Activated B cell treated with CpG ODN at 0.5 μM for 24 hours (primary cell): ENCODE measurements at regions of chr12 and their contacts with region 1.

Region 1: DNA sequence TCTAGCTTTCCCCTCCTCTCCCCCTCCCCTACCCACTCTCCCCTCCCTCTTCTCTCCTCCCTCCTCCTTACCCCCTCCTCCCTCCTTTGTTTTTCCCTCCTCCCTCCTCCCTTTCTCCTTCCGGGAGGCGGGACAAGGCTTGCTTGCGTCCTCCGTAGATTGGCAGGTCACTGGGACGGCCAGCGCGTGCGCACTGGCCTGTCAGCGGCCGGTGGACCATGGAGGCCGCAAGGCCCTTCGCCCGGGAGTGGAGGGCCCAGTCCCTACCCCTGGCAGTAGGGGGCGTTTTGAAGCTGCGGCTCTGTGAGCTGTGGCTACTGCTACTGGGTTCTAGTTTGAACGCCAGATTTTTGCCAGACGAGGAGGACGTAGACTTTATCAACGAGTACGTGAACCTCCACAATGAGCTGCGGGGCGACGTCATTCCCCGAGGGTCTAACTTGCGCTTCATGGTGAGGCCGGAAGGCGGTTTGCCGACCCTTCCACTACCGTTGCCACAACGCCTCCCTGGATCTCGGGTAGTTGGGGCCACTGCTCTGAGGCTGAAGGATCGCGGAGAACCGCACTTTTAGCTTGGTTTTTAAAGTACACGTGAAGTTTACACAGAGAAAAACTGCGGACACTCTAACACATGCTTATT is at the start of gene GLIPR1L2:
- DNase-seq: peak; percentile 86
- ATAC-seq: peak; percentile 95
- H3K4me3 Mint-ChIP-seq: peak within 1 kb of the TSS; percentile 94
- H3K27ac Mint-ChIP-seq: peak within 1 kb of the TSS; percentile 97
- H3K4me1 Mint-ChIP-seq: peaks cover 38% of the 10 kb centered on the region
- H3K27me3 Mint-ChIP-seq: no peaks in the 10 kb centered on the region
- CTCF ChIP-seq: peak; percentile 68
- total RNA-seq, gene GLIPR1L2: 0.20 TPM in 1 of 2 replicates, not detected in the other

Region 2: DNA sequence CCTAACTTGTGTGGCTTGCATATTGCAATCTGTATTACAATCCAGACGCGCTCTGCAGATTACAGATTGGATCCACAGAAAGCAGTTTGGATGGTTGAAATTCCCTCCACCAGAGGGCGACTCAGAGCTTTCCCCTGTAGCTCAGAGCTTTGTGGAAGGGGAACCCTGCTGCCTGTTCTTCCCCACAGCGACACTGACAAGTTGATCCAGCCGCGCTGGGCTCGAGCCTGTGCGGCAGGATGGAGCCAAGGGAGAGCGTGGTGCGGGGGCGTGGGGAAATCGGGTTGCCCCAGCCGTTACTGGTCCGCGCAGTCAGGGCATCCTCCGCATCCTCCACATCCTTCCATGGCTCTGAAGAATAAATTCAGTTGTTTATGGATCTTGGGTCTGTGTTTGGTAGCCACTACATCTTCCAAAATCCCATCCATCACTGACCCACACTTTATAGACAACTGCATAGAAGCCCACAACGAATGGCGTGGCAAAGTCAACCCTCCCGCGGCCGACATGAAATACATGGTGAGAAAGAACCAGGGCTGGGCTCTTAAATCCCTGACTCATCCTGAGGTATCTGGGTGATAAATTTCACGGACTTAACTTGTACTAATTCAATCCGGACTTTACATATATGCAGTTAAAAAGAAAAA is 56.5 kb before region 1 on chr12 and contains the start of gene GLIPR1L1:
- CTCF ChIA-PET with region 1: interaction called, 7 read pairs
- POLR2A ChIA-PET with region 1: no interaction called
- intact Hi-C with region 1: loop called (anchors 1 kb)
- DNase-seq: peak; percentile 46
- ATAC-seq: peak; percentile 75
- H3K4me3 Mint-ChIP-seq: peak within 1 kb of the TSS; percentile 60
- H3K27ac Mint-ChIP-seq: no peak within 1 kb of the TSS
- H3K4me1 Mint-ChIP-seq: peaks cover 16% of the 10 kb centered on the region
- H3K27me3 Mint-ChIP-seq: peaks cover 23% of the 10 kb centered on the region
- CTCF ChIP-seq: peak; percentile 87
- total RNA-seq, gene GLIPR1L1: not detected in 2 replicates

Region 3: DNA sequence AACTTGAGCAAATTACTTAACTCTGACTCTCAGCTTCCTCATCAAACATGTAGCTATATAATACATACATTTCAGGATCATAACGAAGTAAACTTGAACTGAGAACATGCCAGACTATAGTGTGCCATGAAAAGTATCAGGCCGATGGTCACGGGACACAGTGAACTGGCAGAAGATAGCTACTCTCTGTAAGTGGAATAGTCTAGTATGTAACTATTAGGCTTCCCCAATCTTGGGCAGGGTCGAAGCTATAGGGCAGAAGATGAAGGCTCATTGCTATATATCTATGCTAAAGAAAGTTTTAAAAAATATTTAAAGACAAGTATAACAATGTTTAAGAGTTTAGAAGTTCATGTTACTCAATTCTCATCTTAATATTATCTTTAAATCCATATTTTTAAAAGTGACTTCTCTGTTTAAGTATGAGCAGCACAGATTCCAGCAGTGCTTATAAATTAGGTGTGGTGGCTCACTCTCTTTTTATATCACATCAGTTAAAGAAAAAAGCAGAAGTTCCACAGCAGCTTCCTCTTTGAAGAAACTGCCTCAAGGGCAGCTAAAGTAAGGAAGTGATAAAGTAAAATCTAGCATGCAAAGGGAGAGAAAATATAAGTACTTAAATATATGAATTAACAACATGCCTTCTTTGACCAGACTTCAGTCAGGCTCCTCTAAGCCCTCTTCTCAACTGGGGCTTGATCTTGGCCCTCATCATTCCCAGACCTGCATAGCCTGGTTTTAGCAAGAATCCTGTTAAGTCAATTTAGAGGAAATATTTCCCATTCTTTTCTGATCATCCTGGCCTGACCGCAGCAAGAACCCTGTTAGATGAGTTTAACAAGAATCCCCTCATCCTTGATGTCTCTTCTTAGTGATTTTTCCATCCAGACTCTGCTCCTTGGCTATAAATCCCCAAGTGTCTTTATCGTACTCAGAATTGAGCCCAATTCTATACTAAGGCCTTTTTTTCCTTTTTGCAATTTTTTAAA is 81.2 kb after region 1 on chr12:
- CTCF ChIA-PET with region 1: no interaction called
- POLR2A ChIA-PET with region 1: interaction called, 10 read pairs
- intact Hi-C with region 1: no loop called
- DNase-seq: no peak
- ATAC-seq: peak; percentile 86
- H3K4me3 Mint-ChIP-seq: peak overlapping the region; percentile 66
- H3K27ac Mint-ChIP-seq: peak overlapping the region; percentile 98
- H3K4me1 Mint-ChIP-seq: peaks cover 43% of the 10 kb centered on the region
- H3K27me3 Mint-ChIP-seq: peaks cover 2% of the 10 kb centered on the region
- CTCF ChIP-seq: no peak

Region 4: GRCh38 chr12:75505706-75506312 is 114.8 kb after region 1 on chr12:
- CTCF ChIA-PET with region 1: interaction called, 16 read pairs
- POLR2A ChIA-PET with region 1: interaction called, 18 read pairs
- intact Hi-C with region 1: loop called (anchors 1 kb)
- DNase-seq: no peak
- ATAC-seq: peak; percentile 45
- H3K4me3 Mint-ChIP-seq: no peak overlapping the region
- H3K27ac Mint-ChIP-seq: no peak overlapping the region
- H3K4me1 Mint-ChIP-seq: peaks cover 17% of the 10 kb centered on the region
- H3K27me3 Mint-ChIP-seq: no peaks in the 10 kb centered on the region
- CTCF ChIP-seq: no peak

Region 5: DNA sequence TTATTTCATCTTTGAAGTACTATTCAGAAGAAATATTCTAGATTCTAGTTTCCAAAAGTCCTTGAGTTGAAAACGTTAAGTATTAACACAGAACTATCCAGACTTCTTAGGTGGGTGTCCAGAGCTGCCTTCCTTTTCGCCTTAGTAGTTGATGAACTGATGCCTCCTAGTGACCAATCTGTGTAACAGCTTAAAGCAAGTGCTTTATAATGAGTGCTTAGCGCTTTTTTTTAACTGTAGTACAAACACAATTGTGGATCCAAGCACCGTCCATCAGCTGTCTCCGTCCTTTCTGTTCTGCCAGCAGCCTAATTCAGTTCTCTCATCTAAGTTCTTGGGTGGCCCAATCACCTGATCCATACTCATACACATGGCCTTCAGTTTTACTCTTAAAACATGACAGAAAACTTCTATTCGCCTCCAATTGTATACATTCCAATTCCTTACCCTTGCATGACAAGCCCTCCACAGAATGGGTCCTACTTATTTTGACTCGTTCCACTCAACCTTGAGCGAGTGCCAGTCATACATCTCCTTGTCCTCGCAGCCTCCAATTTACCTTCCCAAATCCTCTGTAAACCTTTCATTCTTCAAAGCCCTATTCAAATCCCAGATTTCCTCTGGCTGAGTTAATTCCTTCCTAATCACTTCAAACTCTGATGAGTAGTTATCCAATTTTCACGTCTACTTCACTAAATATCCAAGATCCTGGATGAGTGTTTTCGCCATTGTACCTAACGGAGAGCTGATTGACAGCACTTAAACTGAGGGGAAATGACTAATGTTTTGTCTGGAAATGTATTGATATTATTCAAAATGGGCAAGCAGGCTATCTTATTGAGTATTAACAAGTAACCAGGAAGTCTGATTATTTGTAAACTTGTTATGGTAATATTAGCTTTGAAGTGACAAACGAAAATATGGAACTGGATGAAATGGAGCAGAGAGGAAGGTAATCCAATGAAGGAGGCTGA is 646.4 kb after region 1 on chr12:
- CTCF ChIA-PET with region 1: interaction called, 6 read pairs
- POLR2A ChIA-PET with region 1: no interaction called
- intact Hi-C with region 1: loop called (anchors 1 kb)
- DNase-seq: no peak
- ATAC-seq: peak; percentile 79
- H3K4me3 Mint-ChIP-seq: no peak overlapping the region
- H3K27ac Mint-ChIP-seq: no peak overlapping the region
- H3K4me1 Mint-ChIP-seq: peaks cover 9% of the 10 kb centered on the region
- H3K27me3 Mint-ChIP-seq: no peaks in the 10 kb centered on the region
- CTCF ChIP-seq: peak; percentile 55

Region 6: DNA sequence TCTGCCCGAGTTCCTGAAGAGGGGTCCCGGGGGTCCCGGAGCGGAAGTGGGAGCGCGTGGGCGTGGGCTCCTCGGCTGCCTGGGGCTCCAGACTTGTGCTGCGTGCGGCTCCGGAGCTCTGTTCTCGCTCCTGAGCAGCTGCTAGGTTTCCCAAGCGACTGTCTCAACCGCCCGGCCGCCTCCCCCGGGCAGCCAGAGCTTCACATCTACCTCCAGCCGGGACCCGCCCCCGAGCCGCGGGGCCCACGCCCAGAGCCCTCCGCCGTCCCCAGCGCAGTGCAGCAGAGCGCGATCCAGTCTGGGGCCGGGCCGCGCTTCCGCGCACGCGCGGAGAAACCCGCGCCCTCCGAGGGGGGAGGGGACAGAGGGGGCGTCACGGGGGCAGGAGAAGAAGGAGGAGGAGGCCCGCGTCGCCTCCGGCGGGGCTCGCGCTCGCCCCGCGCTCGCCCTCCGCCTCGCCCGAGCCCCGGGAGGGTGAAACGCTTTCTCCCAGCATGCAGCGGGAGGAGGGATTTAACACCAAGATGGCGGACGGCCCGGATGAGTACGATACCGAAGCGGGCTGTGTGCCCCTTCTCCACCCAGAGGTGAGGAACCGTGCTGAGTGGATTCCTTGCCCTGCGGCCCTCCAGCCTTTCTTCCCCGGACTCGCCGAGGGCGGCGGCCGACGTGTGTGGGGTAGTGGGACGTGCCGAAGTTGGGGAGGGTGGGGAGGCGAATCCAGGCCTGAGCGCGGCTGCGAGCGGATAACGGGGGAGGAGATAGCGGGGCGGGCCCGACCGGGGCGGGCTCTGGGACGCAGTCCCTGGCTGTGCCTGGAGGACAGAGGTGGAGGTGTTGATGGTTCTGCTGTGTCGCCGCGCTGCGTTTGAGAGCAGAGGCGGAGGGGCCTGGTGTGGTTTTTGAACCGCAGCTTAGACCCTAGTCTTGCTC is 1373.0 kb after region 1 on chr12 and contains the start of gene ZDHHC17:
- CTCF ChIA-PET with region 1: no interaction called
- POLR2A ChIA-PET with region 1: no interaction called
- intact Hi-C with region 1: loop called (anchors 1 kb)
- DNase-seq: peak; percentile 96
- ATAC-seq: peak; percentile 87
- H3K4me3 Mint-ChIP-seq: peak within 1 kb of the TSS; percentile 97
- H3K27ac Mint-ChIP-seq: peak within 1 kb of the TSS; percentile 96
- H3K4me1 Mint-ChIP-seq: peaks cover 44% of the 10 kb centered on the region
- H3K27me3 Mint-ChIP-seq: no peaks in the 10 kb centered on the region
- CTCF ChIP-seq: no peak
- total RNA-seq, gene ZDHHC17: 51.8 and 70.8 TPM in 2 replicates